ENCODE measurements at regions of chr16 and their contacts with region 1.

Region 1: DNA sequence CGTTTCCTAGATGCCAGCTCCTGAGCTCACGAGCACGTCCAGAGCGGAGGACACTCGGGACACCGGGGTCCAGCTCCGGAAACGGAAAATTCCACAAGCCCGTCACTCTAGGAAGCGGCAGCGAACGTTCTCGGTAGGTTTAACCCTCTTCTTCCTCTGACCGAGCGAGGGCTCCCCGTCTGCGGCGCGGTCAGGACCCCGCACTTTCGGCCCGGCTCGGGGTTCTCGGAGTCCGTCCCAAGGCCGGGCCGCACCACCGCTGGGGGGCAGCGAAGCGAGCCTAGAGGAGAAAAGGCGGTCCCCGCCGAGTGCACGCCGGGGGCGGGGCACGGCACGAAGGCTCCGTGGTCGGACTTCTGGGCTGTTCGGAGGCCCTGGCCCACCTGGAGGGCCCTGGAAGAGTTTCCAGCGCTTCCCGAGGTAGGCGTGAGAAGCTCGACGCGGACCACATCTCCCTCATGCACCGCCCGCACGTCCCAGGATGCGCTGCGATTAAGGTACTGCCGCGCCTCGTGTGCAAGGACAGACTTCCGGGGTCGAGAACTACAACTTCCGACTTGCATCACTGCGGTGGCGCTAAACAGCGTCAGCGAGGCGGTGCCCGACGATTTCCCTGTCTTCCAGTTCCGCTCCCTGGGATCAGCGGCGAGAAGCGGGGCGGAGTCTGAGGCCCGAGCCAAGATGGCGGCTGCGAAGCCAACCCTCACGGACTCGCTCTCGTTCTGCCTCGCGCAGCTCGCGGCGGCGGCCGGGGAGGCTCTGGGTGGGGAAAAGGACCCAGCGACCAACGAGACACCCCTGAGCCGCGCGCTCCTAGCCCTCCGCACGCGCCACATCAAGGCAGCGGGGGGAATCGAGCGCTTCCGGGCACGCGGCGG is at the start of gene ARMC5:
- DNase-seq: peak; percentile 99
- ATAC-seq: peak; percentile 76
- H3K4me3 ChIP-seq: peak within 1 kb of the TSS; percentile 71 to 94 (median 87)
- H3K4me3 Mint-ChIP-seq: peak within 1 kb of the TSS; percentile 94
- H3K27ac ChIP-seq: peak within 1 kb of the TSS; percentile 94 to 99
- H3K27ac Mint-ChIP-seq: peak within 1 kb of the TSS; percentile 100
- H3K4me1 ChIP-seq: peaks cover 29 to 42% of the 10 kb centered on the region in 2 donors
- H3K4me1 Mint-ChIP-seq: peaks cover 50% of the 10 kb centered on the region
- H3K27me3 ChIP-seq: no peaks in the 10 kb centered on the region
- H3K27me3 Mint-ChIP-seq: no peaks in the 10 kb centered on the region
- CTCF ChIP-seq: peak; percentile 57
- total RNA-seq, gene ARMC5: 11.2 and 11.7 TPM in 2 replicates

Region 2: GRCh38 chr16:30893744-30894539 is 565.1 kb before region 1 on chr16 and contains the start of gene BCL7C:
- CTCF ChIA-PET with region 1: no interaction called
- POLR2A ChIA-PET with region 1: interaction called, 3 read pairs
- intact Hi-C with region 1: loop called (anchors 1 kb)
- DNase-seq: peak; percentile 85
- ATAC-seq: peak; percentile 80
- H3K4me3 ChIP-seq: peak within 1 kb of the TSS; percentile 11 to 72 (median 65)
- H3K4me3 Mint-ChIP-seq: peak within 1 kb of the TSS; percentile 91
- H3K27ac ChIP-seq: peak within 1 kb of the TSS; percentile 63 to 79
- H3K27ac Mint-ChIP-seq: peak within 1 kb of the TSS; percentile 93
- H3K4me1 ChIP-seq: peaks cover 32 to 43% of the 10 kb centered on the region in 2 donors
- H3K4me1 Mint-ChIP-seq: peaks cover 48% of the 10 kb centered on the region
- H3K27me3 ChIP-seq: no peaks in the 10 kb centered on the region
- H3K27me3 Mint-ChIP-seq: no peaks in the 10 kb centered on the region
- CTCF ChIP-seq: no peak
- total RNA-seq, gene BCL7C: 30.5 and 31.6 TPM in 2 replicates

Region 3: GRCh38 chr16:31032736-31033708 is 426.1 kb before region 1 on chr16 and contains the start of gene STX4:
- CTCF ChIA-PET with region 1: no interaction called
- POLR2A ChIA-PET with region 1: no interaction called
- intact Hi-C with region 1: loop called (anchors 1 kb)
- DNase-seq: peak; percentile 100
- ATAC-seq: peak; percentile 76
- H3K4me3 ChIP-seq: peak within 1 kb of the TSS; percentile 76 to 99 (median 90)
- H3K4me3 Mint-ChIP-seq: peak within 1 kb of the TSS; percentile 95
- H3K27ac ChIP-seq: peak within 1 kb of the TSS; percentile 99 to 100
- H3K27ac Mint-ChIP-seq: peak within 1 kb of the TSS; percentile 99
- H3K4me1 ChIP-seq: peaks cover 8 to 16% of the 10 kb centered on the region in 2 donors
- H3K4me1 Mint-ChIP-seq: peaks cover 21% of the 10 kb centered on the region
- H3K27me3 ChIP-seq: no peaks in the 10 kb centered on the region
- H3K27me3 Mint-ChIP-seq: no peaks in the 10 kb centered on the region
- CTCF ChIP-seq: no peak
- total RNA-seq, gene STX4: 111 and 120 TPM in 2 replicates

Region 4: GRCh38 chr16:31202414-31203375 is 256.4 kb before region 1 on chr16 and contains the start of gene PYCARD:
- CTCF ChIA-PET with region 1: interaction called, 5 read pairs
- POLR2A ChIA-PET with region 1: no interaction called
- intact Hi-C with region 1: loop called (anchors 5 kb)
- DNase-seq: no peak
- ATAC-seq: peak; percentile 34
- H3K4me3 ChIP-seq: peak within 1 kb of the TSS; percentile 59 to 86 (median 78)
- H3K4me3 Mint-ChIP-seq: peak within 1 kb of the TSS; percentile 92
- H3K27ac ChIP-seq: peak within 1 kb of the TSS; percentile 62 to 73
- H3K27ac Mint-ChIP-seq: peak within 1 kb of the TSS; percentile 95
- H3K4me1 ChIP-seq: peaks cover 32 to 48% of the 10 kb centered on the region in 2 donors
- H3K4me1 Mint-ChIP-seq: peaks cover 55% of the 10 kb centered on the region
- H3K27me3 ChIP-seq: no peaks in the 10 kb centered on the region
- H3K27me3 Mint-ChIP-seq: no peaks in the 10 kb centered on the region
- CTCF ChIP-seq: no peak
- total RNA-seq, gene PYCARD: 31.8 and 35.7 TPM in 2 replicates

Region 5: DNA sequence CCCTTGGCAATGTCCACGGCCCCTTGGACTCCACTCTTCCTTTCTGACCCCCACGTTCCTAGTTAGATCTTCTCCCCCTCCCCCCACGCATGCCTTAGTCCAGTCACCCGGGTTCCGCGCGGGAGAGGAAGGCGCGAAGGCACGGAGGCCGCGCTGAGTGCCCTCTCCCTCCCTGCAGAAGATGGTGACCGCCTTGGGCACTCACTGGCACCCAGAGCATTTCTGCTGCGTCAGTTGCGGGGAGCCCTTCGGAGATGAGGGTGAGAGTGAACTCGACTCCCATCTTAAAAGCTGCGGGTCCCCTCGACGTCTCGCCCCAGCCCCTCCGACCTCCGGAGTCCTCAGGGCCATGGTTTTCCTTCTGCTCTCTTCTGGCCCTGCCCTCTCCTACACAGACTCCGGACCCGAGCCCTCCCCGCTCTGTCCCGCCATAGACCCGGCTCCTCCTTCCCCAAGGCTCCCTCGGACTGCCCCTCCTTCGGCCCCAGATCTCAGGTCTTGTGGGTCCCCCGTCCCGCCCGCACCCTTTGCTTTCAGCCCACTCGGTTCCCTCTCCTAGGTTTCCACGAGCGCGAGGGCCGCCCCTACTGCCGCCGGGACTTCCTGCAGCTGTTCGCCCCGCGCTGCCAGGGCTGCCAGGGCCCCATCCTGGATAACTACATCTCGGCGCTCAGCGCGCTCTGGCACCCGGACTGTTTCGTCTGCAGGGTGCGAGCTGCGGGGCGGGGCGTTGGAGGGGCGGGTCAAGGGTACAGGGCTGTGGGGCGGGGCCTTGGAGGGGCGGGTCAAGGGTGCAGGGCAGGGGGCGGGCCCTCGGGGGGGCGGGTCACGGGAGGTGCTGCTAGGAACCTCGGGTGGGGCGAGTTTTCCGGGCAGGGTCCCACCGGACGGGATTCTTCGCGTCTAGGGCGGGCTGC is 17.5 kb after region 1 on chr16:
- CTCF ChIA-PET with region 1: interaction called, 6 read pairs
- POLR2A ChIA-PET with region 1: interaction called, 8 read pairs
- intact Hi-C with region 1: loop called (anchors 1 kb)
- DNase-seq: peak; percentile 81
- ATAC-seq: peak; percentile 91
- H3K4me3 ChIP-seq: peak overlapping the region in 4 of 5 experiments; percentile 57 to 65 (median 62)
- H3K4me3 Mint-ChIP-seq: peak overlapping the region; percentile 90
- H3K27ac ChIP-seq: no peak overlapping the region
- H3K27ac Mint-ChIP-seq: peak overlapping the region; percentile 83
- H3K4me1 ChIP-seq: peaks cover 19 to 28% of the 10 kb centered on the region in 2 donors
- H3K4me1 Mint-ChIP-seq: peaks cover 33% of the 10 kb centered on the region
- H3K27me3 ChIP-seq: peaks cover 0 to 21% (median 8%) of the 10 kb centered on the region in 4 experiments
- H3K27me3 Mint-ChIP-seq: peaks cover 8% of the 10 kb centered on the region
- CTCF ChIP-seq: no peak

Region 6: GRCh38 chr16:31507929-31508705 is 49.0 kb after region 1 on chr16 and contains the start of gene RUSF1:
- CTCF ChIA-PET with region 1: interaction called, 7 read pairs
- POLR2A ChIA-PET with region 1: interaction called, 5 read pairs
- intact Hi-C with region 1: loop called (anchors 1 kb)
- DNase-seq: peak; percentile 87
- ATAC-seq: peak; percentile 94
- H3K4me3 ChIP-seq: peak within 1 kb of the TSS; percentile 36 to 95 (median 87)
- H3K4me3 Mint-ChIP-seq: peak within 1 kb of the TSS; percentile 92
- H3K27ac ChIP-seq: peak within 1 kb of the TSS; percentile 80 to 88
- H3K27ac Mint-ChIP-seq: peak within 1 kb of the TSS; percentile 95
- H3K4me1 ChIP-seq: peaks cover 32 to 33% of the 10 kb centered on the region in 2 donors
- H3K4me1 Mint-ChIP-seq: peaks cover 43% of the 10 kb centered on the region
- H3K27me3 ChIP-seq: no peaks in the 10 kb centered on the region
- H3K27me3 Mint-ChIP-seq: no peaks in the 10 kb centered on the region
- CTCF ChIP-seq: no peak
- total RNA-seq, gene RUSF1: 98.8 and 103 TPM in 2 replicates

Region 7: GRCh38 chr16:31868691-31869167 is 409.6 kb after region 1 on chr16:
- CTCF ChIA-PET with region 1: interaction called, 13 read pairs
- POLR2A ChIA-PET with region 1: interaction called, 5 read pairs
- intact Hi-C with region 1: loop called (anchors 2 kb)
- DNase-seq: peak; percentile 81
- ATAC-seq: no peak
- H3K4me3 ChIP-seq: peak overlapping the region in 3 of 5 experiments; percentile 18 to 26 (median 22)
- H3K4me3 Mint-ChIP-seq: peak overlapping the region; percentile 69
- H3K27ac ChIP-seq: peak overlapping the region; percentile 87 to 88
- H3K27ac Mint-ChIP-seq: peak overlapping the region; percentile 75
- H3K4me1 ChIP-seq: peaks cover 19 to 27% of the 10 kb centered on the region in 2 donors
- H3K4me1 Mint-ChIP-seq: peaks cover 46% of the 10 kb centered on the region
- H3K27me3 ChIP-seq: no peaks in the 10 kb centered on the region
- H3K27me3 Mint-ChIP-seq: peaks cover 5% of the 10 kb centered on the region
- CTCF ChIP-seq: peak; percentile 90

Measured in B cell (primary cell).